ENCODE measurements at regions of chr2 and their contacts with region 1.

Region 1: GRCh38 chr2:196160101-196160500 is 11.3 kb downstream of the STK17B start:
- DNase-seq: peak in 8 of 9 donors; percentile 61 to 92 (median 88)
- ATAC-seq: peak; percentile 84
- H3K4me3 ChIP-seq: peak overlapping the region; percentile 33
- H3K4me3 Mint-ChIP-seq: peak overlapping the region; percentile 61 to 98 (median 87)
- H3K27ac ChIP-seq: peak overlapping the region; percentile 94
- H3K27ac Mint-ChIP-seq: peak overlapping the region; percentile 84 to 98 (median 94)
- H3K4me1 ChIP-seq: peaks cover 53 to 65% of the 10 kb centered on the region in 2 donors
- H3K4me1 Mint-ChIP-seq: peaks cover 45 to 85% (median 69%) of the 10 kb centered on the region in 7 donors
- H3K27me3 ChIP-seq: no peaks in the 10 kb centered on the region
- H3K27me3 Mint-ChIP-seq: no peaks in the 10 kb centered on the region

Region 2: GRCh38 chr2:196076778-196077568 is 83.1 kb before region 1 on chr2:
- CTCF ChIA-PET with region 1: interaction called, 32 read pairs
- POLR2A ChIA-PET with region 1: interaction called, 39 read pairs
- intact Hi-C with region 1: loop called in 1 of 2 experiments (anchors 1 kb)
- DNase-seq: no peak
- ATAC-seq: no peak
- H3K4me3 ChIP-seq: no peak overlapping the region
- H3K4me3 Mint-ChIP-seq: no peak overlapping the region
- H3K27ac ChIP-seq: no peak overlapping the region
- H3K27ac Mint-ChIP-seq: no peak overlapping the region
- H3K4me1 ChIP-seq: peaks cover 9 to 13% of the 10 kb centered on the region in 2 donors
- H3K4me1 Mint-ChIP-seq: peaks cover 10 to 34% (median 25%) of the 10 kb centered on the region in 7 donors
- H3K27me3 ChIP-seq: no peaks in the 10 kb centered on the region
- H3K27me3 Mint-ChIP-seq: no peaks in the 10 kb centered on the region

Region 3: GRCh38 chr2:196143730-196144131 is 16.4 kb before region 1 on chr2:
- CTCF ChIA-PET with region 1: interaction called, 5 read pairs
- POLR2A ChIA-PET with region 1: interaction called, 87 read pairs
- intact Hi-C with region 1: no loop called
- DNase-seq: no peak
- ATAC-seq: no peak
- H3K4me3 ChIP-seq: no peak overlapping the region
- H3K4me3 Mint-ChIP-seq: peak overlapping the region in 9 of 10 donors; percentile 23 to 87 (median 52)
- H3K27ac ChIP-seq: peak overlapping the region; percentile 49
- H3K27ac Mint-ChIP-seq: peak overlapping the region; percentile 71 to 92 (median 87)
- H3K4me1 ChIP-seq: peaks cover 48 to 50% of the 10 kb centered on the region in 2 donors
- H3K4me1 Mint-ChIP-seq: peaks cover 36 to 90% (median 75%) of the 10 kb centered on the region in 7 donors
- H3K27me3 ChIP-seq: no peaks in the 10 kb centered on the region
- H3K27me3 Mint-ChIP-seq: no peaks in the 10 kb centered on the region

Region 4: DNA sequence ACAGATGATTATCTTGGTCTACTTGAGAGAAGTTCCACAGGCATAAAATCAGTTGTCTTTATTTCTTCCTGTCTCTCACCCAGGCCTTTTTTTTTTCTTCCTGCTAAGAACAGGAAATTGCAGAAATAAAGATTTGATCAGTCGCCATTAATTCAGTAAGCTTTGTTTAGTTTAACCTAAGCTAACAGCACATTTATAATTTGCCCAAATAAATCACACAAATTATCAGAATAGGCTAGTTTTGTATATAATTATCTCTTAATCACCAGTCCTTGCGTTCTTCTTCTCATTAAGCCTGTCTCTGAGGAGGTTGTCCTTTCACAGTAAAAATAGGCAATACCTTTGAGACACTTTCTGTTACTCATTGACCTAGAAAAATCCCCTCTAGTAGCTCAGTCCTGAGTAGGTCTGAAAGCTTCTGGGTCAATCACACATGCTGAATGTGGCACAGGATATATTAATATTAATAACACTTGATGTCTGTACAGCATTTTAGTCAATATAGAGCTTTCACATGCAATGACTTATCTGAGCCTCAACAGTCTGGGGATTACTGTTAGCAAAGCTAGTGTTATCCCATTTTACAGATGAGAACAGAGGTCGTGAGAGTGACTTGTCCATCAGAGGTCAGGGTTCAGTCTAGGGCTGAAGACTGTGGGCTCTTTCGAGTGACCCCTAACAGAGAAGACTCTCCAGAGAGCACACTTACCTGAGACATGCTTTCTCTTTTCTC is 22.5 kb after region 1 on chr2:
- CTCF ChIA-PET with region 1: interaction called, 8 read pairs
- POLR2A ChIA-PET with region 1: interaction called, 46 read pairs
- intact Hi-C with region 1: loop called (anchors 2 kb)
- DNase-seq: peak in 1 of 9 donors; percentile 48
- ATAC-seq: peak; percentile 39
- H3K4me3 ChIP-seq: peak overlapping the region; percentile 34
- H3K4me3 Mint-ChIP-seq: peak overlapping the region; percentile 27 to 80 (median 70)
- H3K27ac ChIP-seq: peak overlapping the region; percentile 72
- H3K27ac Mint-ChIP-seq: peak overlapping the region; percentile 89 to 97 (median 93)
- H3K4me1 ChIP-seq: peaks cover 69 to 76% of the 10 kb centered on the region in 2 donors
- H3K4me1 Mint-ChIP-seq: peaks cover 55 to 98% (median 85%) of the 10 kb centered on the region in 7 donors
- H3K27me3 ChIP-seq: no peaks in the 10 kb centered on the region
- H3K27me3 Mint-ChIP-seq: no peaks in the 10 kb centered on the region

Region 5: GRCh38 chr2:196233021-196233804 is 73.1 kb after region 1 on chr2:
- CTCF ChIA-PET with region 1: interaction called, 4 read pairs
- POLR2A ChIA-PET with region 1: interaction called, 38 read pairs
- intact Hi-C with region 1: no loop called
- DNase-seq: no peak
- ATAC-seq: no peak
- H3K4me3 ChIP-seq: peak overlapping the region; percentile 19
- H3K4me3 Mint-ChIP-seq: peak overlapping the region in 8 of 10 donors; percentile 29 to 71 (median 46)
- H3K27ac ChIP-seq: peak overlapping the region; percentile 84
- H3K27ac Mint-ChIP-seq: peak overlapping the region; percentile 89 to 99 (median 97)
- H3K4me1 ChIP-seq: peaks cover 31 to 72% of the 10 kb centered on the region in 2 donors
- H3K4me1 Mint-ChIP-seq: peaks cover 36 to 97% (median 89%) of the 10 kb centered on the region in 7 donors
- H3K27me3 ChIP-seq: no peaks in the 10 kb centered on the region
- H3K27me3 Mint-ChIP-seq: no peaks in the 10 kb centered on the region

Region 6: GRCh38 chr2:196263181-196263747 is 103.2 kb after region 1 on chr2:
- CTCF ChIA-PET with region 1: no interaction called
- POLR2A ChIA-PET with region 1: interaction called, 13 read pairs
- intact Hi-C with region 1: loop called (anchors 1 kb)
- DNase-seq: peak in 7 of 9 donors; percentile 70 to 88 (median 83)
- ATAC-seq: peak; percentile 90
- H3K4me3 ChIP-seq: peak overlapping the region; percentile 31
- H3K4me3 Mint-ChIP-seq: peak overlapping the region; percentile 63 to 90 (median 82)
- H3K27ac ChIP-seq: peak overlapping the region; percentile 87
- H3K27ac Mint-ChIP-seq: peak overlapping the region; percentile 90 to 99 (median 97)
- H3K4me1 ChIP-seq: peaks cover 53 to 82% of the 10 kb centered on the region in 2 donors
- H3K4me1 Mint-ChIP-seq: peaks cover 39 to 94% (median 89%) of the 10 kb centered on the region in 7 donors
- H3K27me3 ChIP-seq: no peaks in the 10 kb centered on the region
- H3K27me3 Mint-ChIP-seq: no peaks in the 10 kb centered on the region

Region 7: DNA sequence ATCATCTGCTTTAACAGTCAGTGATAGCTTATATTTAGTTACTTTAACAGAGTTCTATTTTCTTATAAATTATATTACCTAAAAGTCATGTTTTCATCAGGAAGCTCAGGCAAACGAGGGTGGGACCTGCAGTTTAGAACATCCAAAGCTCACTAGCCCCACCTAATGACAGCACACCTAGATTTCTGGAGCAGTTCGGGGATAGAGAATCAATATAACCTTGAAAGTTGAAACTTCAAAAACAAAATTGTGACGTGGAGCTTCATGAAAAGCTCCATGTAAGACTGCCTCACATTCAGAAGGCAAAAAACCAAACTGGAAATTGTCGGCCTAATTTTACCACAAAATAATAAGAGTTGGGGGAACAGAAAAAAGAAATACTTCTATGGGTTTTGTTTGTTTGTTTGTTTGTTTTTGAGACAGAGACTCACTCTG is 293.5 kb after region 1 on chr2:
- CTCF ChIA-PET with region 1: no interaction called
- POLR2A ChIA-PET with region 1: no interaction called
- intact Hi-C with region 1: loop called in 1 of 2 experiments (anchors 5 kb)
- DNase-seq: peak in 7 of 9 donors; percentile 2 to 39 (median 19)
- ATAC-seq: peak; percentile 60
- H3K4me3 ChIP-seq: no peak overlapping the region
- H3K4me3 Mint-ChIP-seq: no peak overlapping the region
- H3K27ac ChIP-seq: no peak overlapping the region
- H3K27ac Mint-ChIP-seq: no peak overlapping the region
- H3K4me1 ChIP-seq: no peaks in the 10 kb centered on the region
- H3K4me1 Mint-ChIP-seq: peaks cover 0 to 6% (median 0%) of the 10 kb centered on the region in 7 donors
- H3K27me3 ChIP-seq: peaks cover 0 to 6% of the 10 kb centered on the region in 2 donors
- H3K27me3 Mint-ChIP-seq: peaks cover 25 to 42% (median 31%) of the 10 kb centered on the region in 5 donors

Measured in naive thymus-derived CD4-positive, alpha-beta T cell (primary cell).